K562 (cell line): ENCODE measurements at regions of chrX and their contacts with region 1.

Region 1: DNA sequence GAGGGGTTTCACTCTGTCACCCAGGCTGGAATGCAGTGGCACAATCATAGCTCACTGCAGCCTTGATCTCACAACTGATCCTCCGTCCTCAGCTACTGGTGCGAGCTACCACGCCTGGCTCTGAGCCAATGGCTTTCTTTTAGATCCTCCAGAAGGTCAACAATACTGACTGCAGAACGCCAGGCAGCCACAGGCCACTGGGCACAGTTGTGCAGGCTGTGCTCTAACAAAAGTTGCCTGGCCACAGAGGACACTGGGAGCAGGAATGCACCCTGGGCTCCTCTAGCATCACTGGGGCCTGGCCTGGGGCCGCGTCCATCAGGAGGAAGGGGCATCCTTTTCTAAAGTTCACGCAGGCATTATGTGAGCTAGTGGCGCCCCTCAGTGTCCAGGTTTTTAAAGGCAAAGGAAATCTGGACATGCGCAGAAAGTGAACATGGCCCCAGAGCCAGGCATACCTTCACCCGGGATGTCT is 14.9 kb upstream of the PORCN start:
- DNase-seq: peak; percentile 36 to 74 (median 41)
- ATAC-seq: peak; percentile 82
- H3K4me3 ChIP-seq: no peak overlapping the region
- H3K27ac ChIP-seq: no peak overlapping the region
- H3K4me1 ChIP-seq: peaks cover 10 to 16% of the 10 kb centered on the region in 2 experiments; a peak in 4 of 5 replicates
- H3K27me3 ChIP-seq: no peaks in the 10 kb centered on the region
- CTCF ChIP-seq: peak; percentile 65 to 77 (median 67)
- EP300 ChIP-seq: no peak
- POLR2A ChIP-seq: no peak
- RAD21 ChIP-seq: peak; percentile 51 to 77

Region 2: GRCh38 chrX:47836164-47837072 is 657.5 kb before region 1 on chrX and contains the start of gene ZNF81:
- CTCF ChIA-PET with region 1: no interaction called
- POLR2A ChIA-PET with region 1: no interaction called
- in situ Hi-C with region 1: no loop called
- intact Hi-C with region 1: loop called (anchors 10 kb)
- DNase-seq: peak; percentile 85 to 98 (median 90)
- ATAC-seq: peak; percentile 99
- H3K4me3 ChIP-seq: peak within 1 kb of the TSS; percentile 60
- H3K27ac ChIP-seq: peak within 1 kb of the TSS; percentile 62
- H3K4me1 ChIP-seq: no peaks in the 10 kb centered on the region; a peak in 1 of 5 replicates
- H3K27me3 ChIP-seq: no peaks in the 10 kb centered on the region
- CTCF ChIP-seq: no peak
- EP300 ChIP-seq: no peak
- POLR2A ChIP-seq: peak; percentile 70
- RAD21 ChIP-seq: no peak
- polyA plus RNA-seq, gene ZNF81: 9.1 to 9.6 TPM

Region 3: GRCh38 chrX:48083212-48083611 is 410.7 kb before region 1 on chrX:
- CTCF ChIA-PET with region 1: no interaction called
- POLR2A ChIA-PET with region 1: no interaction called
- in situ Hi-C with region 1: loop called (anchors 5 kb)
- intact Hi-C with region 1: loop called (anchors 1 kb)
- DNase-seq: peak; percentile 52 to 73 (median 58)
- ATAC-seq: peak; percentile 90
- H3K4me3 ChIP-seq: no peak overlapping the region
- H3K27ac ChIP-seq: no peak overlapping the region
- H3K4me1 ChIP-seq: no peaks in the 10 kb centered on the region
- H3K27me3 ChIP-seq: no peaks in the 10 kb centered on the region; a peak in 1 of 5 replicates
- CTCF ChIP-seq: peak; percentile 51 to 68 (median 68)
- EP300 ChIP-seq: no peak
- POLR2A ChIP-seq: no peak
- RAD21 ChIP-seq: peak; percentile 57 to 67; a peak in 3 of 4 replicates

Region 4: GRCh38 chrX:48508400-48509244 is 14.7 kb after region 1 on chrX and contains the start of gene PORCN:
- CTCF ChIA-PET with region 1: no interaction called
- POLR2A ChIA-PET with region 1: interaction called, 10 read pairs
- in situ Hi-C with region 1: no loop called
- intact Hi-C with region 1: no loop called
- DNase-seq: peak; percentile 88 to 95 (median 94)
- ATAC-seq: peak; percentile 98
- H3K4me3 ChIP-seq: peak within 1 kb of the TSS; percentile 54
- H3K27ac ChIP-seq: peak within 1 kb of the TSS; percentile 64
- H3K4me1 ChIP-seq: peaks cover 11 to 31% of the 10 kb centered on the region in 2 experiments; a peak in 4 of 5 replicates
- H3K27me3 ChIP-seq: no peaks in the 10 kb centered on the region
- CTCF ChIP-seq: no peak
- EP300 ChIP-seq: no peak
- POLR2A ChIP-seq: peak; percentile 73
- RAD21 ChIP-seq: no peak
- polyA plus RNA-seq, gene PORCN: 0.34 to 0.62 TPM